Dorsolateral prefrontal cortex (tissue), 120 donors: ENCODE measurements at regions of chr14 and their contacts with region 1.

Region 1: DNA sequence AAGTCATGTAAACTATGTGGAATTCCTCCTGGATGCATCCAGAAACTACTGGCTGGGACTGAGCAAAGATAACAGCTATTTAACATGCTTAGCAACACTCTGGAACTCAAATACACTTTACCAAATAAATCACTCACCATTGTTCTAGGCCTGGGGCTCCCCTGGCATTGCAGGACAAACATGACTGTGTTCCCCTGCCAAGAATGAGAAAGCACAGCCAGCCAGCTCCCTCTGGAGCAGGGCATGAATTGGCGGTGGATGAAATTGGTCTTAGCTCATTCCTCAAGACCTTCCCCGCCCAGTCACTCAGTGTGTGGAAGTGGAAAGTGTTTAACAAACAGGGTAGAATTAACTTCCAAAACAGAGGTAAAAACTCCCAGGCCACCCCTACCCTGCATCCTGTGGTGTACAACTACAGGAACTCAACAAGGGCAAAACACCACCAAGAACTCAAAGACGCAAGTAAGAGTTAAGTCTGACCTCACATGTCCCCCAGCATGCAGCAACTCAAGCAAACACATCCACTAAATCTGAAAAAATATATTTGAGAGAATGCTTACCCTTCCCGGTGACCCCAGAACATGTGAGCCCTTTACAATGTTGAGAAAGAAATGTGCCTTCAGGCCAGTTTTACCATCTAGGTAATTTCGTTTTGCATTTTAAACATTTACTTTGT is 58.4 kb upstream of the BDKRB2 start:
- DNase-seq: peak in 9 of 10 donors; percentile 9 to 79 (median 63)
- H3K4me3 ChIP-seq: peak overlapping the region in 1 of 59 donors; percentile 3
- H3K27ac ChIP-seq: peak overlapping the region in 53 of 59 donors; percentile 0 to 94 (median 71)
- H3K27me3 ChIP-seq: peaks cover 0 to 3% (median 0%) of the 10 kb centered on the region in 45 donors
- CTCF ChIP-seq: peak in 25 of 56 donors; percentile 1 to 53 (median 26)

Region 2: GRCh38 chr14:96204151-96205058 is 58.1 kb after region 1 on chr14 and contains the start of gene BDKRB2:
- intact Hi-C with region 1: loop called in 1 of 2 experiments (anchors 5 kb)
- DNase-seq: peak; percentile 28 to 84 (median 68)
- H3K4me3 ChIP-seq: peak within 1 kb of the TSS; percentile 32 to 79 (median 58)
- H3K27ac ChIP-seq: peak within 1 kb of the TSS in 35 of 59 donors; percentile 5 to 88 (median 69)
- H3K27me3 ChIP-seq: peaks cover 0 to 6% (median 0%) of the 10 kb centered on the region in 45 donors
- CTCF ChIP-seq: no peak
- total RNA-seq, gene BDKRB2: 0.23 to 3.5 (median 1.1) TPM

Region 3: DNA sequence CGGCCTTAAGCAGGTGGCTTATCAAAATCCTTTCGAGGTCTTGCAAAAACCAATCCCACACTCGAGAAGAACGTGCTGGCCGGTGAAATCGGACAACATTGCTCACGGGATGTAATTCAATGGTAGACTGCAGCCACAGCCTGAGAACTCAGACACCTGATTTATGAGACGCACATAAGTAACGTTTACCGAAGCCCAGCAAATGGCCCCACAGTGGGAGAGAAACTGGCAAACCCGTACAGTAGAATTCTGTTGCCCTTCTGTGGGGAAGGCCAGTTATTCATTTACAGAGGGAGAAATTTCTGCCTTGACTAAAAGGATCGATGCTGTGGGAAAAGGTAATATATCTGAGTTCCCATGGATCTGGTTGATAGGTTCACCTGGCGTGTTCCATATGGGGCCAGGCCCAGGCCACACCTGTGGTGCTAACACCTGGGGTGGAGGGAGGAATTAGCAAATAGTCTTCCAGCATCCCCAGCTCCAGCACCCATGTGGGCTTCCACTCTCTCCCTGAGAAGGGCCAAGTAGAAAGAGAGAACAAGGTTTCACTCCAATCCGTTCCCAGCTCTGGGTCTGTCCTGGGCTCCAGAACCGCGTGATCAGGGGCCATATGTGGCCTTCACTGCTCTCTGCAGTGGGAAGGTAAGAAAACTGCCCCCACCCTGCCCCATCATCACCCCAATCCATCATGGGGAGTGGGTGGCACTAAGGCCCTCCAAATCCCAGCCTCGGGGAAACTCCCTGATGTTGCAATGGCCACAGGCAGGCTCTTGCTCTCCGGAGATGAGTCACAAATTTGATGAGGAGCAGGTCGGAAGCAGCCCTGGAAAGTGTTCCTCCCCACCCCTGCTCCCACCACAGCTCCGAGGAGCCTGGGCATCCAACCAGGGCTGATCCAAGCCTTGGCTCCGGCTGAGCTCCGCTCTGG is 122.4 kb after region 1 on chr14:
- intact Hi-C with region 1: loop called in 1 of 2 experiments (anchors 2 kb)
- DNase-seq: no peak
- H3K4me3 ChIP-seq: no peak overlapping the region
- H3K27ac ChIP-seq: no peak overlapping the region
- H3K27me3 ChIP-seq: no peaks in the 10 kb centered on the region
- CTCF ChIP-seq: no peak